Naive thymus-derived CD4-positive, alpha-beta T cell (primary cell): ENCODE measurements at regions of chr10 and their contacts with region 1.

Region 1: DNA sequence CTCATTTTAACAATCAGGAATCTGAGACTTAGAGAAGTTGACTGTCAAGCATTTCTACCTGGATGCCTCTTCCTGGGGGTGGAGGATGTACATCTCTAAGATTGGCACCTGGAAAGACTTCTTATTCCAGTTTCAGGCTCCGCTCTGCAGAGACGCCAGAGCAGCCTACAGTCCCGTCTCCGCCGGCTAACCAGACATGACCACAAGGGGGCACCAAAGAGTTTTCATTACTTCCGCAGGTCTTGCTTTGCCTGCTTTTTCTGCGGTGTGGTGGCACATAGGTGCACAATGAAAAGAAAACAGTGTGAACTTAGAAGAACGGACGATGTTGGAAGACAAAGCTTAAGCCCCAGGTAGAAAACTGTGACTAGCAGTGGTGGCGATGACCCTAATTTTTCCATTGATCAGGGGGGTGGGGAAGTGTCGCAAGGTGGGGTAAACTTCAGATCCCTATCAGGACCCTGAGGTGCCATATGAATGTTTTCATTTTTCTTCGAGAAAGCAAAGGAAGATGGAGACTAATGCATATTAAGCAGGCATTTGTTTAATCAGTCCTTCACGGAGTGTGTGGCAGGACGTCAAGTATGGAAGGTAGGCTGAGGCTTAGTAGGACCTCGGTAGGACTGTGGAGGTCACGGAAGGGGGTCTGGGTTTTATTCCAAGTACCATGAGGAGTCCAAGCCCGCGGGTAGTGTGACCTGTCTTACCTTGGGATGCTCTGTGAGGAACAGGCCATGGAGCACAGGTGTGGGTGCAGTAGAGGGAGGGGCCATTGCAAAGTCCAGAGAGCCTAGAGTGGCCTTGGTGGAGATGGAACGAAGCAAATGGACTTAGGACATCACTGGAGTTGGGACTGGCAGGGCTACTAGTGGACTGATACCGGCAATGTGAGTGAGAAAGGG is 60.1 kb upstream of the SORCS3 start:
- DNase-seq: peak; percentile 37 to 76 (median 66)
- ATAC-seq: peak; percentile 83
- H3K4me3 ChIP-seq: no peak overlapping the region
- H3K4me3 Mint-ChIP-seq: peak overlapping the region in 4 of 10 donors; percentile 7 to 38 (median 16)
- H3K27ac ChIP-seq: no peak overlapping the region
- H3K27ac Mint-ChIP-seq: peak overlapping the region in 1 of 9 donors; percentile 0
- H3K4me1 ChIP-seq: no peaks in the 10 kb centered on the region
- H3K4me1 Mint-ChIP-seq: peaks cover 0 to 21% (median 13%) of the 10 kb centered on the region in 7 donors
- H3K27me3 ChIP-seq: no peaks in the 10 kb centered on the region
- H3K27me3 Mint-ChIP-seq: peaks cover 3 to 31% (median 10%) of the 10 kb centered on the region in 5 donors

Region 2: GRCh38 chr10:104291439-104291951 is 289.5 kb before region 1 on chr10:
- CTCF ChIA-PET with region 1: no interaction called
- POLR2A ChIA-PET with region 1: no interaction called
- intact Hi-C with region 1: loop called in 1 of 2 experiments (anchors 2 kb)
- DNase-seq: peak; percentile 77 to 89 (median 86)
- ATAC-seq: peak; percentile 100
- H3K4me3 ChIP-seq: no peak overlapping the region
- H3K4me3 Mint-ChIP-seq: peak overlapping the region in 4 of 10 donors; percentile 0 to 64 (median 26)
- H3K27ac ChIP-seq: no peak overlapping the region
- H3K27ac Mint-ChIP-seq: peak overlapping the region in 5 of 9 donors; percentile 1 to 81 (median 20)
- H3K4me1 ChIP-seq: peaks cover 0 to 9% of the 10 kb centered on the region in 2 donors
- H3K4me1 Mint-ChIP-seq: peaks cover 2 to 11% (median 6%) of the 10 kb centered on the region in 7 donors
- H3K27me3 ChIP-seq: peaks cover 0 to 5% of the 10 kb centered on the region in 2 donors
- H3K27me3 Mint-ChIP-seq: peaks cover 3 to 45% (median 10%) of the 10 kb centered on the region in 5 donors

Region 3: GRCh38 chr10:104591441-104591840 is 10.4 kb after region 1 on chr10:
- CTCF ChIA-PET with region 1: no interaction called
- POLR2A ChIA-PET with region 1: no interaction called
- intact Hi-C with region 1: no loop called
- DNase-seq: no peak
- ATAC-seq: no peak
- H3K4me3 ChIP-seq: no peak overlapping the region
- H3K4me3 Mint-ChIP-seq: no peak overlapping the region
- H3K27ac ChIP-seq: no peak overlapping the region
- H3K27ac Mint-ChIP-seq: no peak overlapping the region
- H3K4me1 ChIP-seq: peaks cover 0 to 12% of the 10 kb centered on the region in 2 donors
- H3K4me1 Mint-ChIP-seq: peaks cover 6 to 16% (median 14%) of the 10 kb centered on the region in 7 donors
- H3K27me3 ChIP-seq: no peaks in the 10 kb centered on the region
- H3K27me3 Mint-ChIP-seq: peaks cover 0 to 12% (median 5%) of the 10 kb centered on the region in 5 donors

Region 4: DNA sequence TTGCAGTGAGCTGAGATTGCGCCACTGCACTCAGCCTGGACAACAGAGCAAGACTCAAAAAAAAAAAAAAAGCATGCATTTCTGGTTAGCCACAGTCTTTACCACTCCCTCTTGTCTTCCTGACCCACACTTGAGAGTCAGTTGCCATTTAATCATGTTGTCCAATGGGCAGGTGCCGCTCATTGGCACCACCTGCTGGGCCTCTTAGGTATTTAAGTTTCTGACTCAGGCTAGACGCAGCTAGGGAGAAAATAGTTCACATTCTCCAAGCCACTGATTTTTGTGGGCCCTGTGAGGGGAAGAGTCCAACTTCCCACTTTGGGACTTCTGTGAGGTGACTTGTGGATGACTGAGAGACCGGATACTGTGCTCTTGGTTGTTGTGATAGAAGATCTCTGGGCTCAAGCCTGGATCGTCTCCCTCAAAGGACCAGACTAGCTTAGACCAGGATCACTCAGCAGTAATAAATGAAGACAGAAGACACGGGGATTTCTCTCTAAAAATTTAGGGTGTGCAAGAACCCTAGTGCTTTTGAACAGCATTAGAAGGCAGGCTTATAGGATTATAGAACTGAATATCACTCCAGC is 33.3 kb after region 1 on chr10:
- CTCF ChIA-PET with region 1: no interaction called
- POLR2A ChIA-PET with region 1: no interaction called
- intact Hi-C with region 1: loop called (anchors 1 to 2 kb)
- DNase-seq: peak in 5 of 9 donors; percentile 5 to 27 (median 14)
- ATAC-seq: peak; percentile 34
- H3K4me3 ChIP-seq: no peak overlapping the region
- H3K4me3 Mint-ChIP-seq: no peak overlapping the region
- H3K27ac ChIP-seq: no peak overlapping the region
- H3K27ac Mint-ChIP-seq: no peak overlapping the region
- H3K4me1 ChIP-seq: no peaks in the 10 kb centered on the region
- H3K4me1 Mint-ChIP-seq: no peaks in the 10 kb centered on the region
- H3K27me3 ChIP-seq: no peaks in the 10 kb centered on the region
- H3K27me3 Mint-ChIP-seq: peaks cover 0 to 19% (median 5%) of the 10 kb centered on the region in 5 donors

Region 5: GRCh38 chr10:104622598-104623209 is 41.7 kb after region 1 on chr10:
- CTCF ChIA-PET with region 1: interaction called, 3 read pairs
- POLR2A ChIA-PET with region 1: no interaction called
- intact Hi-C with region 1: loop called (anchors 2 kb)
- DNase-seq: peak in 3 of 9 donors; percentile 8 to 17 (median 11)
- ATAC-seq: no peak
- H3K4me3 ChIP-seq: no peak overlapping the region
- H3K4me3 Mint-ChIP-seq: no peak overlapping the region
- H3K27ac ChIP-seq: no peak overlapping the region
- H3K27ac Mint-ChIP-seq: no peak overlapping the region
- H3K4me1 ChIP-seq: no peaks in the 10 kb centered on the region
- H3K4me1 Mint-ChIP-seq: no peaks in the 10 kb centered on the region
- H3K27me3 ChIP-seq: no peaks in the 10 kb centered on the region
- H3K27me3 Mint-ChIP-seq: peaks cover 30 to 56% (median 50%) of the 10 kb centered on the region in 5 donors

Region 6: DNA sequence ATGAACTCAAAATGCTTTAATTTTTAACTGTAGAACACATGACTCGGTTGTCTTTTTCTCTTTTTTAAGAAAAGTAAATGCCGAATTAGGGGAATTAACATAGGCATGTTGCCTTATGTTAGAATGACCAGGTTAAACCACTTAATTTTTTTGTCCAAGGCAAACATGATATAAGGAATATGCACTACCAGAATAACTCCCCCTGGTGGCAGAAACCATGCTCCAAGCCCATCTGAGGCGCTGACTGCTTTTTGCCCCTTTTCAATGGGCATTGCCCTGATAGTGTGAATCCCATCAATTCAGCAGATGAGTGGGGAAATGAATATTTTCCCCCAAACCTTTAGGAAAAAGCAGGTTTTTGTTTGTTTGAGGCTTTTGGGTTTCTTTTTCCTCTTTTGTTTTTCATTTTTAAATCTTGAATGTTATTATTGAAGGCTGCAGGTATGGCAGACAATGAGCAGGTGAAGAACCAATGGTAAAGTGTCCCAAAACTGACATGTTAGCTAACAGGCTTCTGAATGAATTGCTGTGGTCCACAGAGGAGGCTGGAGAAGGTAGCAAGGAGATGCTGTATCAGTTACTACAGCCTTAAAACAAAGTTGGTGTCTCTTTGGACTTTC is 344.3 kb after region 1 on chr10:
- CTCF ChIA-PET with region 1: no interaction called
- POLR2A ChIA-PET with region 1: no interaction called
- intact Hi-C with region 1: loop called in 1 of 2 experiments (anchors 1 kb)
- DNase-seq: peak in 4 of 9 donors; percentile 12 to 25 (median 16)
- ATAC-seq: no peak
- H3K4me3 ChIP-seq: no peak overlapping the region
- H3K4me3 Mint-ChIP-seq: no peak overlapping the region
- H3K27ac ChIP-seq: no peak overlapping the region
- H3K27ac Mint-ChIP-seq: no peak overlapping the region
- H3K4me1 ChIP-seq: no peaks in the 10 kb centered on the region
- H3K4me1 Mint-ChIP-seq: peaks cover 0 to 28% (median 0%) of the 10 kb centered on the region in 7 donors
- H3K27me3 ChIP-seq: no peaks in the 10 kb centered on the region
- H3K27me3 Mint-ChIP-seq: peaks cover 0 to 5% (median 0%) of the 10 kb centered on the region in 5 donors

Region 7: DNA sequence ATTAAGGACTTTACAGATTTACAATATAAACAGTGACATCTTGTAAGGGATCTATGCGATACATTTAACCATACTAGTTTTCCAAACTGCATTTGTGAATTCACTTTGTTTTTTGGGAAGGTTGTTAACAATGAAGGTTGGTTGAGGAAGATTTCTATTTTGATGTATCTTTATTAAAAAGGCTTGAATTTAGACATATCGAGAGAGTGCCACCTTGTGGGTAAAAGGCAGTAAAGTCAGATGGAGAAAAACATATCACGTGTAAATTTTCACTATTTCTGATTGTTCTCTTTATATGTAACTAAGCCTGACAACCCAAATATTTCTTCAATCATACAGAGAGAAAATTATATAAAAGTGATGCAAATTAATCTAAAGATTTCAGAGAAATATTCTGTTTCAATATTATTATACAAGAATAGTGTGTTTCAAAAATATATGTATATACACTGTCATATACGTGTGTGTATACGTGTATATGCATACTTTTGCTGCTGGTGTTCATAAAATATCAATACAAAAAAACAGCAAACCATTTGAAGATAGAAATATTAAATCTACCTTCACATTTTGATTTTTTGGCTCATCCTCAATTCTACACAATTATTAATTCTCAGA is 1594.8 kb after region 1 on chr10:
- CTCF ChIA-PET with region 1: no interaction called
- POLR2A ChIA-PET with region 1: no interaction called
- intact Hi-C with region 1: loop called in 1 of 2 experiments (anchors 10 kb)
- DNase-seq: no peak
- ATAC-seq: no peak
- H3K4me3 ChIP-seq: no peak overlapping the region
- H3K4me3 Mint-ChIP-seq: no peak overlapping the region
- H3K27ac ChIP-seq: no peak overlapping the region
- H3K27ac Mint-ChIP-seq: no peak overlapping the region
- H3K4me1 ChIP-seq: no peaks in the 10 kb centered on the region
- H3K4me1 Mint-ChIP-seq: no peaks in the 10 kb centered on the region
- H3K27me3 ChIP-seq: no peaks in the 10 kb centered on the region
- H3K27me3 Mint-ChIP-seq: peaks cover 0 to 6% (median 0%) of the 10 kb centered on the region in 5 donors

Region 8: GRCh38 chr10:106278383-106278782 is 1697.4 kb after region 1 on chr10:
- CTCF ChIA-PET with region 1: no interaction called
- POLR2A ChIA-PET with region 1: no interaction called
- intact Hi-C with region 1: no loop called
- DNase-seq: no peak
- ATAC-seq: no peak
- H3K4me3 ChIP-seq: no peak overlapping the region
- H3K4me3 Mint-ChIP-seq: no peak overlapping the region
- H3K27ac ChIP-seq: no peak overlapping the region
- H3K27ac Mint-ChIP-seq: no peak overlapping the region
- H3K4me1 ChIP-seq: no peaks in the 10 kb centered on the region
- H3K4me1 Mint-ChIP-seq: no peaks in the 10 kb centered on the region
- H3K27me3 ChIP-seq: no peaks in the 10 kb centered on the region
- H3K27me3 Mint-ChIP-seq: no peaks in the 10 kb centered on the region